CD4-positive, alpha-beta memory T cell (primary cell): ENCODE measurements at regions of chr2 and their contacts with region 1.

Region 1: GRCh38 chr2:174039551-174040416 is 74.6 kb upstream of the SP3 start:
- DNase-seq: peak; percentile 76 to 86 (median 78)
- H3K4me3 ChIP-seq: peak overlapping the region in 1 of 2 donors; percentile 45
- H3K4me3 Mint-ChIP-seq: peak overlapping the region; percentile 12 to 79 (median 53)
- H3K27ac ChIP-seq: peak overlapping the region; percentile 73
- H3K27ac Mint-ChIP-seq: peak overlapping the region; percentile 73 to 94 (median 89)
- H3K4me1 ChIP-seq: peaks cover 10% of the 10 kb centered on the region
- H3K4me1 Mint-ChIP-seq: peaks cover 8 to 10% (median 8%) of the 10 kb centered on the region in 4 donors
- H3K27me3 ChIP-seq: no peaks in the 10 kb centered on the region
- H3K27me3 Mint-ChIP-seq: peaks cover 1 to 3% of the 10 kb centered on the region in 2 donors

Region 2: DNA sequence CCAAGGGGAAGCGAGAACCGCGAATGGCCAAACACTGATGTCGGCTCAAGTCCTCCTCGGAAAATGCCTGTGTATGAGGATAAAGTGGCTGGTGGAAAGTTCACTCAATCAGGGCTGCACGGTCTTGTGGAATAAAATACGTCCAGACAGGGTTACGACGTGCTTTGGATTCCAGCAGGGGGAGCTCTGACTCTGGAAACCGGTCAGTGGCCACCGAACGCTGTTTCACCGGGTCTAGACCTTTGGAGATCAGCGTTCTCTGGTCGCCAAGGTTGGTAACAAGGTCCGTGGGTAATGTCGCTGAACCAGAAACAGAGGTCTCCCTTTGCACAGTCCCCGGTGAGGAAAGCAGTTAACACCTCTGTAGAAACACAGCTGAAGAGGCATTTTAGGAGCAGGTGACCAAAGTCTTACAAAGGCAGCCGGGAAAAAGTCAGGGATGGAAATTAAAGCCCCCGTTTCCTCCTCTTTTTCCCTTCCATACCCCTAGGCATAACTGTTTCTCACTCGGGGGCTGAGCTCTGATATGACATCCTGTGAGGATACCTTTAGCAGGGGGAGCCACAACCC is 637.3 kb before region 1 on chr2:
- CTCF ChIA-PET with region 1: interaction called, 9 read pairs
- POLR2A ChIA-PET with region 1: no interaction called
- intact Hi-C with region 1: loop called (anchors 1 kb)
- DNase-seq: peak; percentile 62 to 70 (median 68)
- H3K4me3 ChIP-seq: no peak overlapping the region
- H3K4me3 Mint-ChIP-seq: peak overlapping the region in 1 of 8 donors; percentile 17
- H3K27ac ChIP-seq: no peak overlapping the region
- H3K27ac Mint-ChIP-seq: peak overlapping the region in 1 of 7 donors; percentile 56
- H3K4me1 ChIP-seq: peaks cover 6% of the 10 kb centered on the region
- H3K4me1 Mint-ChIP-seq: peaks cover 0 to 6% (median 6%) of the 10 kb centered on the region in 4 donors
- H3K27me3 ChIP-seq: peaks cover 8% of the 10 kb centered on the region
- H3K27me3 Mint-ChIP-seq: peaks cover 31 to 55% of the 10 kb centered on the region in 2 donors

Region 3: DNA sequence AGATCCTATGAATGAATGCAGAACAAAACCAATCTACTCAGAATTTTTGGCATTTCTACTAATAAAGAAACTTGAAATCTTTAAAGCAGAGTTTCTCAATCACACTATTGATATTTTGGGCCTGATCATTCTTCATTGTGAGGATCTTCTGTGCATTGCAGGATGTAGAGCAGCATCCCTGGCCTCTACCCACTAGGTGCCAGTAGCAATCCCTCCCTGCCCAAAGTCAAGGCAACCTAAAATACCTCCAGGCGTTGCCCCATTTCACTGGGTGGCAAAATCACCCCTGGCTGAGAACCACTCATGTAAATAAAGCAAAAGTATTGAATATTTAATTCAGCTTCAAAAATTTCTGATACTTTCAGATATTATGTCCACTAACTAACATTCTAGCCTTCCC is 287.6 kb before region 1 on chr2:
- CTCF ChIA-PET with region 1: no interaction called
- POLR2A ChIA-PET with region 1: no interaction called
- intact Hi-C with region 1: loop called (anchors 5 kb)
- DNase-seq: peak in 1 of 5 donors; percentile 2
- H3K4me3 ChIP-seq: no peak overlapping the region
- H3K4me3 Mint-ChIP-seq: no peak overlapping the region
- H3K27ac ChIP-seq: no peak overlapping the region
- H3K27ac Mint-ChIP-seq: no peak overlapping the region
- H3K4me1 ChIP-seq: no peaks in the 10 kb centered on the region
- H3K4me1 Mint-ChIP-seq: no peaks in the 10 kb centered on the region
- H3K27me3 ChIP-seq: no peaks in the 10 kb centered on the region
- H3K27me3 Mint-ChIP-seq: peaks cover 5 to 13% of the 10 kb centered on the region in 2 donors

Region 4: DNA sequence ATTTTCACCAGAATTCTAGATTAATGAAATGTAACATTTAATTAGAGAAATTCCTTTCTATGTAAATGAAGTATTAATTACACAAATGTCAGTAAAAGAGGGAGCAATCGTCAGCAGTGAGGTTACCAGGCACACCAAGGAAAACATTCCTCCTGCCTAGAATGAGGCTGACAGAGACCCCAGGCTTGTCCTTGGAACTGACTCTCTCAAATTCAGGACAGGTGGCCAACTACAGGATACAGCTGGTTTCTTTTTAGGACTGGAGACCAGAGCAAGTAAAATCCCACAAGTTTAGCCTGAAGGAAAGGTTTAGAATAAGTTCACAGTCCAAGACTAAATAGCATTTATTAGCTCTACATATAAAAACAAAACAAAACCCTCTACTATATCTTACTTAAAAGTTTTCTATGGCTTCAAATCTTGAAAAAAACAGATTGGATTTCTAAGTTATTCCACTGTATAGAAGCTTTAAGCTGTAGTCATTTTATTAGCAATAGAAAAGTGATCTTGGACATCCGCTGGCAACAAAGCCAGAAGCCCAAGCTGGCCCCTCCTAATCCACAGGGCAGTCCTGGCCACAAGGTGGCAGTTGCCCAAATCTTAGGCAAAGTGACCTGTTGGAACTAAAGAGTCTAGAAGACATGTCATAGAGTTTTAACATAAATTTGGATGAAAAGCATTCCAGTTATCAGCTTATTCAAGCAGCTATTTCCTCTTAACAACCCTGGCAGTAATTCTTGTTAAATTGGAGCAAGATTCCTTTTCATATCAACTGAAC is 155.6 kb before region 1 on chr2:
- CTCF ChIA-PET with region 1: interaction called, 11 read pairs
- POLR2A ChIA-PET with region 1: interaction called, 3 read pairs
- intact Hi-C with region 1: loop called (anchors 1 kb)
- DNase-seq: peak in 4 of 5 donors; percentile 20 to 24 (median 21)
- H3K4me3 ChIP-seq: no peak overlapping the region
- H3K4me3 Mint-ChIP-seq: no peak overlapping the region
- H3K27ac ChIP-seq: no peak overlapping the region
- H3K27ac Mint-ChIP-seq: no peak overlapping the region
- H3K4me1 ChIP-seq: no peaks in the 10 kb centered on the region
- H3K4me1 Mint-ChIP-seq: no peaks in the 10 kb centered on the region
- H3K27me3 ChIP-seq: no peaks in the 10 kb centered on the region
- H3K27me3 Mint-ChIP-seq: peaks cover 6 to 17% of the 10 kb centered on the region in 2 donors

Region 5: GRCh38 chr2:173965329-173966025 is 74.3 kb before region 1 on chr2 and contains the start of gene SP3:
- CTCF ChIA-PET with region 1: interaction called, 3 read pairs
- POLR2A ChIA-PET with region 1: interaction called, 6 read pairs
- intact Hi-C with region 1: loop called (anchors 1 kb)
- DNase-seq: peak; percentile 95 to 97 (median 96)
- H3K4me3 ChIP-seq: peak within 1 kb of the TSS; percentile 53 to 83
- H3K4me3 Mint-ChIP-seq: peak within 1 kb of the TSS; percentile 90 to 99 (median 96)
- H3K27ac ChIP-seq: peak within 1 kb of the TSS; percentile 96
- H3K27ac Mint-ChIP-seq: peak within 1 kb of the TSS; percentile 94 to 100 (median 98)
- H3K4me1 ChIP-seq: peaks cover 33% of the 10 kb centered on the region
- H3K4me1 Mint-ChIP-seq: peaks cover 23 to 51% (median 35%) of the 10 kb centered on the region in 4 donors
- H3K27me3 ChIP-seq: no peaks in the 10 kb centered on the region
- H3K27me3 Mint-ChIP-seq: no peaks in the 10 kb centered on the region
- total RNA-seq, gene SP3: 117 to 130 TPM

Region 6: DNA sequence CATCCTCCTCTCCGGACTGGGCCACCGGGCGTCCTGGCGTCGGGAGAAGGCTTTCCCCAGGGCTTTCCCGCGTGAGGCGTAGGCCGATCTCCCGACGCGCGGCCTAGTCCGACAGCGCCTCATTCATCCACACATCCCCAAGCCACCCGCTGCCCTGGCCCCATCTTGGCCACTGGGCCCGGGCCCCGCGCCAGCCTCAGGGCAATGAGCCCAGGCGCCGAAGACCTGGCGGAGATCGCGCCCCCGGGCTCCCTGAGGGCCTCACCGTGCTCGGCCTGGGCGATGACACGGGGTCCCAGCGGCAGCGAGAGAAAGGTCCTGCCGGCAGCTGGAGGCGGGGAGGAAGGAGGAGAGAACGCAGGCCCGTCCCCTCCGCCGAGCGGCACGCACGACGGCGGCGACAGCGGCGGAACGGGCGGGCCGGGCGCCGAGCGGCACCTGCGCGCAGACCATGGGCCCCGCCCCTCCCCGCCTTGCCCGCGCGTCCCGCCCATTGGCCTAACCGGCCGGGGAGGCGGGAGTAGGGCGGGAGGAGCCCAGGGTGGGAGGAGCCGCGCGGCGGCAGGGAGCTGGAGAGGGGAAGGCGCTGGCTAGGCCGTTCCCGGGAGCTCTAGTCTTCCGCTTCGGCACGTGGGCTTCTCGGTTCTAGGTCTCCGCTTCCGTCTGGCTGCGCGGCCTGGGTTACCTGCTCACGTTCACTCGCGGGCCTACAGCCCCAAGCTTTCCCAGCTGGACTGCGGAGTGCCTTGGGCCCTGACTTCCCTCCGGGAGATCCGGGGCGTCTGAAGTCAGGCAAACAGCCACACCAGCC is 208.6 kb after region 1 on chr2 and contains the start of gene OLA1:
- CTCF ChIA-PET with region 1: no interaction called
- POLR2A ChIA-PET with region 1: no interaction called
- intact Hi-C with region 1: loop called (anchors 2 kb)
- DNase-seq: peak; percentile 93 to 99 (median 95)
- H3K4me3 ChIP-seq: peak within 1 kb of the TSS; percentile 84 to 87
- H3K4me3 Mint-ChIP-seq: peak within 1 kb of the TSS; percentile 79 to 88 (median 85)
- H3K27ac ChIP-seq: peak within 1 kb of the TSS; percentile 78
- H3K27ac Mint-ChIP-seq: peak within 1 kb of the TSS; percentile 63 to 87 (median 80)
- H3K4me1 ChIP-seq: peaks cover 14% of the 10 kb centered on the region
- H3K4me1 Mint-ChIP-seq: peaks cover 11 to 32% (median 19%) of the 10 kb centered on the region in 4 donors
- H3K27me3 ChIP-seq: no peaks in the 10 kb centered on the region
- H3K27me3 Mint-ChIP-seq: no peaks in the 10 kb centered on the region
- total RNA-seq, gene OLA1: 31.1 to 31.2 TPM